ENCODE measurements at regions of chr13 and their contacts with region 1.

Region 1: GRCh38 chr13:99436686-99437416 is 64.4 kb upstream of the TM9SF2 start:
- DNase-seq: peak; percentile 94

Region 2: DNA sequence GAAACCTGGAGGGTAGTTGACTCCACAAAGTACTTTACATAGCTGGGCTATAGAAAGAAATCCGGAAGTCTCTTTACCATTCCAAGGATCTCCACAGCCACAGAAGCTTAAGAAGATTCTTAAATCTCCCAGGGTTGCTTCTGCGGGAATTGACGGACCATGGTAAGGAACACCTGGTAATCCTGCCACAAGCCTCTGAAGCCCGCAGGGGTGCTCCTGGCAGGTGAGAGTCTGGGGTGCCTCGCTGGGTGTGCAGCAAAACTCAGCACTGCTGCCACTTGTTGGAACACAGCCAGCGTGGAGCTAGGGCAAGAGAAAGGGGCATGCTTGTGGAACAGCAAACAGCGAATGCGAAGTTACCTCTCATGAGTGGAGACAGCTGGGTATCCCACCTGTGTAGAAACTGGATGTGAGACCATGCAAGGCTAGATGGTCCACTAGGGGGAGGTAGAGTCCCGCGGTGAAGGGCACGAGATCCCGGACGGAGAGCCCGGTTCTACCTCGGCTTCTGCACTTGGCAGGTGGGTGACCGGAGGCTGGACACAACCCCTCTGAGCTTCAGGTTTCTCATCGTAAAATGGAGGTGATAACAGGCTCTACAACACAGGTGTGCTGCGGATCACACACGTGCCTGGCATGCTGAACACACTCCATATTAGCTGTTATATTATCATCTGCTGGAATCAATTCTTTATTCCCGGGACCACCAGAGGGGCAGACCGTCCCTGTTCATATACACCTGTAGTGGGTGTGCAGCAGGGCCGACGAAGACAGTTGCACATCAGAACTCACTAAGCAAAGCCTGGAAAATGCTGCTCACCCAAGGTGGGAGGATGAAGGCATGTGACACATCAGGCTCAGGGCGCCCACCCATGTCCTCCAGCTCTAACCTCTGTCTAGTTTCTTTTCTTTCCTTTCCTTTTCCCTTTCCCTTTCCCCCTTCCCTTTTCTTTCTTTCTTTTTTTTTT is 260.3 kb before region 1 on chr13:
- intact Hi-C with region 1: loop called (anchors 2 kb)
- DNase-seq: peak; percentile 83

Region 3: DNA sequence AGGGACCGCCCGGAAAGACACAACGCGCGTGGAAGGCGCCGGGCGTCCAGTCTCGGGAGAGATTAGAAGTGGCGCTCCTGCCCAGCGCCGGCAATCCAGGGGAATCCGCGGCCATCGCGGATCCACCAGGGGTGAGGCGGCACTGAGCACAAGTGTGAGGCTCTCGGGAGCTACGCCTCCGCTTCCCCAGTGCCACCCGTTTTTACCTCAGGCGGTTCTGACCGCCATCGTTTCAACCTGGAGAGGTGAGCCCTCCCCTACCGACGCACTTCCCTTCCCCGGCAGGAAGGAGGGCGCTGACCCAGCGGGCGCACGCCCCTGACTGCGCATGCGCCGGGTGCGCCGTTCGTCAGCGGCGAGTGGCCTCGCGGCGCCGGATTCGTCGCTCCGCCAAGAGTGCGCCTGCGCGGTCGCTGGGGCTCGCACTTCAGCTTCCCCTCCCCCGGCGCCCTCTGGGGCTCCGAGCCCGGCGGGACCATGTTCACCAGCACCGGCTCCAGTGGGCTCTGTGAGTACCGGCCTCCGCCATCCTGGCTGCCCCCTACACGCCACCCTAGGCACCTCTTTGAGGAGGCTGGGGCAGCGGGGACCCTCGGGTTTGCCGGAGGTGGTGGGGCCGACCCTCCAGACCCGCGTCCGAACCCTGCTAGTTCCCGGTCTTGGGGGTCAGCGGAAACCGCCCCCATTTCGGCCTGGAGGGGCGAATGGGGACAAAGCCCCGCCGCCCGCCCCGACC is 236.3 kb before region 1 on chr13 and contains the start of gene UBAC2:
- intact Hi-C with region 1: loop called (anchors 5 kb)
- DNase-seq: peak; percentile 98
- total RNA-seq, gene UBAC2: 61.2 TPM

Region 4: GRCh38 chr13:99269627-99270241 is 167.1 kb before region 1 on chr13:
- intact Hi-C with region 1: loop called (anchors 2 kb)
- DNase-seq: no peak

Region 5: GRCh38 chr13:99677116-99677951 is 240.5 kb after region 1 on chr13:
- intact Hi-C with region 1: no loop called
- DNase-seq: no peak

Region 6: DNA sequence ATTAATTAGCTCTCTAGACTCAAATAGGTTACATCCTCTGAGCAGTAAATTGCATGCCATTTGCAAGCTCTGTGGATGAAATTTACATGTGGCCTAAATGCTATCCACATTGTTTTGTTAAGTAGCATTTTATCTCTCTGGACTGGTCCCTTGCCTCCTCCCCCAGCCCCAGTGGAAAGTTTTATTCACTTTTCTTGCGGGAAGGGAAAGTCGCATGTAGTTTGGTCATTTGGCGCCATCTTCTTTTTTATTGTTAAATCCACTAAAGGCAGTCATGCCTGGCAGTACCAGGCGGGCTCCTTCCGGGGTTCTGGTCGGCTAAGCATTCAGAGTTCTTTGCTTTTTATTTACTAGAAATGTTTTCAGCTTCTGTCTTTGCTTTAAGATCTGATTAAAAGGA is 253.1 kb after region 1 on chr13:
- intact Hi-C with region 1: no loop called
- DNase-seq: no peak

Measured in cardiac septum (tissue), 1 donor.